ENCODE measurements at regions of chr13 and their contacts with region 1.

Region 1: DNA sequence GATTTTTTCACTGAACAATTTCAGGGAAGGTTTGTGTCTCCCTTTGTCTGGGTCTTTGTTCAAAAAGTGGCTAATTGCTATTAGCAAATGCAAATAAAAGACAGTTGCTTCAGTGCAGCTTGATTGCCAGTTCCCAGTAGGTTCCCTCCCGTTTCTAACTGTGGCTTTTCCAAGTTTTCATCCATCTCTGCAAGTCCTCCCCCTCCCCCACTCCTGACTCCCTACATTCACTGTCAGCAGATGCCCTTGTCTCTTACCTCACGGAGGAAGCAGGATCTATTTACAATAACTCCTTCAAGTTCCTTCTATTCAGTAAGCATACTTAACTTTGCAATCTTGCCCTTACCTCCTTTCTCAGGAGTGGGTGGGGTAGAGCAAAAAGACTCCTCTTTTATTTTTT is 55.4 kb upstream of the SCEL start:
- DNase-seq: no peak
- H3K4me3 Mint-ChIP-seq: no peak overlapping the region
- H3K27ac Mint-ChIP-seq: no peak overlapping the region
- H3K4me1 Mint-ChIP-seq: peaks cover 16% of the 10 kb centered on the region
- H3K27me3 Mint-ChIP-seq: no peaks in the 10 kb centered on the region

Region 2: DNA sequence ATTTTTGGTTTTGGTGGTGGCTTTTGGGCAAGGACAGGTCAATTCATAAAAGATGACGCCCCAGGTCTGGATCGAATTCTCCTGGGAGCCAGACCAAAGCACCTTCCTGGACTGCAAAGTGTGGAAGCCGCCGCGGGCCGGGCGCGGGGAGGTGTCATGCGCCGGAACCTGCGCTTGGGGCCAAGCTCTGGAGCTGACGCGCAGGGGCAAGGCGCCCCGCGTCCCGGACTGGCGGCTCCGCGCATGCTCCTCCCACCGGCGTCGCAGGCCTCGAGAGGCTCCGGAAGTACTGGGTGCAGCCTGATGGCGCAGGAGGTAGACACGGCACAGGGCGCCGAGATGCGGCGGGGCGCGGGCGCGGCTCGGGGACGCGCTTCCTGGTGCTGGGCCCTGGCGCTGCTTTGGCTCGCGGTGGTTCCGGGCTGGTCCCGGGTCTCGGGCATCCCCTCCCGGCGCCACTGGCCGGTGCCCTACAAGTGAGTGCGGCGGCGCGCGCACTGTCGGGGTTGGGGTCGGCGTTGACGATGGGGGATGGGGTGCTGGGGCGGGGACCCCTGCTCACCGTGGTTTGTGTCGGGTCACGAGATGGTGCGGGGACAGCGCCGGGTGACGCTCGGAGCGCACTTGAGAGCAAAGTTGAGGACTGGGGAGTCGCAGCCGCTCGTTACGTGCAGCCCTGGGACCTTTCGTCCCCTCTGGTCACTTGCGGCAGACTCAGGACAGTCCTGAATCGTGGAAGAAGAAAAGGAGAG is 488.1 kb before region 1 on chr13 and contains the start of gene CLN5:
- CTCF ChIA-PET with region 1: interaction called, 5 read pairs
- intact Hi-C with region 1: loop called (anchors 1 kb)
- DNase-seq: peak; percentile 95
- H3K4me3 Mint-ChIP-seq: peak within 1 kb of the TSS; percentile 95
- H3K27ac Mint-ChIP-seq: peak within 1 kb of the TSS; percentile 97
- H3K4me1 Mint-ChIP-seq: peaks cover 39% of the 10 kb centered on the region
- H3K27me3 Mint-ChIP-seq: no peaks in the 10 kb centered on the region
- total RNA-seq, gene CLN5: 13.6 to 14.6 TPM

Region 3: GRCh38 chr13:77184455-77184854 is 295.6 kb before region 1 on chr13:
- CTCF ChIA-PET with region 1: interaction called, 4 read pairs
- intact Hi-C with region 1: loop called (anchors 1 kb)
- DNase-seq: peak; percentile 76
- H3K4me3 Mint-ChIP-seq: no peak overlapping the region
- H3K27ac Mint-ChIP-seq: peak overlapping the region; percentile 20
- H3K4me1 Mint-ChIP-seq: peaks cover 16% of the 10 kb centered on the region
- H3K27me3 Mint-ChIP-seq: no peaks in the 10 kb centered on the region

Region 4: DNA sequence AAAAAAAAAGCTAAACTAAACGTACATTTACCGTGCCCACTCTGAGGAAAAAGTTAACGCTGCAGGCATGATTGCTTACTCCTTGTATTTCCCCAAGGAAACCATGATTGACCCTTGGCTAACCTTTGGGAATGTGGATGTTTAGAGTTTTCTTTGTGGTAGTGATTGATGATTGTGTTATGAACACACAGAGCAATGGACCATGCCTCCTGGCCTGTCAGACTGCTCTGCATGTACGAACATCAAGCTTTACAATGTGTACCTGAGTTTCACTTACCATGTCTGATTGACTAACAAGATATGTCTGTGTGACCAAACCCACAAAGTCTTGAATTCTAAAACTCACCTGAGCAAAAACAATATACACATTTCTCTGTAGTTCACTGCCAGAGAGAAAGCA is 188.3 kb before region 1 on chr13:
- CTCF ChIA-PET with region 1: interaction called, 3 read pairs
- intact Hi-C with region 1: loop called (anchors 1 kb)
- DNase-seq: no peak
- H3K4me3 Mint-ChIP-seq: no peak overlapping the region
- H3K27ac Mint-ChIP-seq: peak overlapping the region; percentile 3
- H3K4me1 Mint-ChIP-seq: peaks cover 38% of the 10 kb centered on the region
- H3K27me3 Mint-ChIP-seq: no peaks in the 10 kb centered on the region

Region 5: GRCh38 chr13:77492982-77493381 is 12.9 kb after region 1 on chr13:
- CTCF ChIA-PET with region 1: interaction called, 17 read pairs
- intact Hi-C with region 1: no loop called
- DNase-seq: peak; percentile 25
- H3K4me3 Mint-ChIP-seq: no peak overlapping the region
- H3K27ac Mint-ChIP-seq: no peak overlapping the region
- H3K4me1 Mint-ChIP-seq: no peaks in the 10 kb centered on the region
- H3K27me3 Mint-ChIP-seq: peaks cover 2% of the 10 kb centered on the region

Region 6: DNA sequence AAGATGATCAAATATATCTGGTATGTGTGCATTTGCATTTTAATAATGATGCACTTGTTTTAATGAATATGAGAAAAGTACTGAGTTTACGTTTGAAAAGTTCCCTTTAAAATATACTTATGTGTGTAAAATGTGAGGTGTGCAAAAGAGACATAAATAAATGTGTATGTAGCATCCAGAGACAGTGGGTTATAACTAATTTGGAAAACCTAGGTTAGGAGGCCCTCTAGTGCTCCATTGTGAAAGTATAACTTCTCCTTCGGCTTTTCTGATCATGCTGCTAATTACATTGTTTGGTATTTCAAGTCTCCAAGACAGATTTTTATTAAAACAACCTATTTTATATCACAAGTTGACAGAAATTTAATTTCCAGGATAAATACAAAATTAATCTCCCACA is 85.6 kb after region 1 on chr13:
- CTCF ChIA-PET with region 1: interaction called, 13 read pairs
- intact Hi-C with region 1: loop called (anchors 1 kb)
- DNase-seq: no peak
- H3K4me3 Mint-ChIP-seq: no peak overlapping the region
- H3K27ac Mint-ChIP-seq: no peak overlapping the region
- H3K4me1 Mint-ChIP-seq: no peaks in the 10 kb centered on the region
- H3K27me3 Mint-ChIP-seq: no peaks in the 10 kb centered on the region

Region 7: GRCh38 chr13:77751513-77752456 is 271.7 kb after region 1 on chr13:
- CTCF ChIA-PET with region 1: interaction called, 5 read pairs
- intact Hi-C with region 1: loop called (anchors 5 kb)
- DNase-seq: peak; percentile 73
- H3K4me3 Mint-ChIP-seq: no peak overlapping the region
- H3K27ac Mint-ChIP-seq: no peak overlapping the region
- H3K4me1 Mint-ChIP-seq: peaks cover 18% of the 10 kb centered on the region
- H3K27me3 Mint-ChIP-seq: no peaks in the 10 kb centered on the region

Measured in activated naive CD4-positive, alpha-beta T cell treated with anti-CD3 and anti-CD28 coated beads for 36 hours (primary cell).